Right cardiac atrium (tissue), 5 donors: ENCODE measurements at regions of chr12 and their contacts with region 1.

Region 1: DNA sequence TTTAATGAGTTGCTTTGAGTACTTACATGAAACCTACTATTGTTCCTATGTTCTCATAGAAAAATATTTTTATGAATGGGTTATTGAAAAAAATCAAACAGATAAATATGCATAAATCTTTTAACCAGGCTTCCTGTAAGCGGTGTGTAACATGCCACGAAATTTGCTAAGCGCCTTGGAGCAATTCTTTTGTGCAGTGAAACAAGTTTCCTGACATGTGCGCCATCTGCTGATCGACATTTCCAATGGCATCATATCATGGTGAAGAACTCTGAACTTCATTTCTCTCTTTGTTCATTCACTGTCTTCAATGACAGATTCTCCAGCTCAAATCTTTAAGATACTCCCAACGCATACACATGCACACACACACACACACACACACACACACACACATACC is 145.6 kb upstream of the NAV3 start:
- DNase-seq: peak; percentile 48 to 75 (median 64)
- ATAC-seq: peak; percentile 80 to 90
- H3K4me3 ChIP-seq: peak overlapping the region; percentile 20
- H3K27ac ChIP-seq: no peak overlapping the region
- H3K4me1 ChIP-seq: no peaks in the 10 kb centered on the region
- H3K27me3 ChIP-seq: no peaks in the 10 kb centered on the region

Region 2: GRCh38 chr12:77049767-77050353 is 635.3 kb before region 1 on chr12:
- intact Hi-C with region 1: loop called in 1 of 4 experiments (anchors 10 kb)
- DNase-seq: no peak
- ATAC-seq: peak; percentile 56 to 74
- H3K4me3 ChIP-seq: no peak overlapping the region
- H3K27ac ChIP-seq: no peak overlapping the region
- H3K4me1 ChIP-seq: no peaks in the 10 kb centered on the region
- H3K27me3 ChIP-seq: no peaks in the 10 kb centered on the region

Region 3: GRCh38 chr12:77152623-77153193 is 532.4 kb before region 1 on chr12:
- intact Hi-C with region 1: loop called (anchors 2 to 10 kb)
- DNase-seq: no peak
- ATAC-seq: peak in 1 of 2 donors; percentile 40
- H3K4me3 ChIP-seq: no peak overlapping the region
- H3K27ac ChIP-seq: no peak overlapping the region
- H3K4me1 ChIP-seq: no peaks in the 10 kb centered on the region
- H3K27me3 ChIP-seq: no peaks in the 10 kb centered on the region

Region 4: DNA sequence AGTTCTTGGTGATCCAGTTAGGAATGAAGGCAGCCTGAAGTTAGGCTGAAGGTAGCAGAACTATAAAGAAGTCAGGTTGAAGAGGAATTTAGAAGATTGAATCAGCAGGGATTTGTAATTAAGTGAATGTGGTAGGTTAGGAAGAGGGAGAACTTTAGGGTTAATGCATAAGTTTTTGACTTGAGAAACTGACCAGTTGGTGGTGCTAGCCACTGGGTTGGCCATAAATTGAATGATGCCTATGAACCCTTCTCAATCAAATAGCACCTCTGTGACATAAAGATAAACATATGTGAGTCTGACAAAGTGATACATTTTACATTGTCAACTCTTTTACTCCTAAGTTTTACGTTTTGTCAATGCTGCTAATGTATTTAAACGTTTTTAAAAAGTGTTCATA is 145.0 kb before region 1 on chr12:
- intact Hi-C with region 1: no loop called
- DNase-seq: no peak
- ATAC-seq: no peak
- H3K4me3 ChIP-seq: no peak overlapping the region
- H3K27ac ChIP-seq: no peak overlapping the region
- H3K4me1 ChIP-seq: no peaks in the 10 kb centered on the region
- H3K27me3 ChIP-seq: no peaks in the 10 kb centered on the region